ENCODE measurements at regions of chr2 and their contacts with region 1.

Region 1: GRCh38 chr2:163841187-163841586 is 105.4 kb upstream of the FIGN start:
- DNase-seq: no peak
- H3K4me3 ChIP-seq: no peak overlapping the region
- CTCF ChIP-seq: no peak

Region 2: DNA sequence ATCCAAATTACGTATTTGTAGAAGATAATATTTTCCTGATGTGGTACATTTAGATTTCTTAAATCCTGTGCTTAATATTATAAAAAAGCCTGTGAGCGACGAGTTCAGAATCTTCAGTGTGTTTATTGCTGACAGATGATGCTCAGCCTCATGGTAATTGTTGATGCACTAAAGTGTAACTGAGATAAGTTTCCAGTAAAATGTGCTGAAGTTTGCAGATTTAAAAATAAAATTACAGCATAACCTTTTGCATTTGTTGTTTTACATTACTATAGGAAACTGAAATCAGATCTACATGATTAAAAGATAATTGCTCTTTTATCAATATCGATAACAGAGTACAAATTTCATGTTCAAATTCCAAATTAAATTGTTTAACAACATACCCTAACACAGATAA is 413.0 kb before region 1 on chr2:
- in situ Hi-C with region 1: no loop called
- DNase-seq: no peak
- H3K4me3 ChIP-seq: no peak overlapping the region
- CTCF ChIP-seq: no peak

Region 3: DNA sequence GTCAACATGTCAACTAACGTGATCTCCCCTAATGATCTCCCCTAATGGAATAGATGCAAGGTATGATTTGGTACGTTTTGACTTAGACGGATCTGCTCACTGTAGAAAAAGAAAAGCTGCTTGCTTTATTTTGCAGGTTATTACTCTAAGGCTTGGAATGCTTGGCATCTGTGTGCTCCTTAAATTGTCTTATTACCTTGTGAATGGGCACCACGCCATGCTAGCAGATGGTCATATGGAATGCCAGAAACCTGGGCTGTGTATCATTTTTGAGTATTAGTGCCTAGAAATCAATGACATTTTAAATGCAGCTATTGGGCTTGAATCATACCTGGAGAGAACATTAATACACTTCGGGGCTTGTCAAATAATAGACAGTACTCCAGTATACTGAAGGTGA is 88.9 kb before region 1 on chr2:
- in situ Hi-C with region 1: loop called (anchors 5 kb)
- DNase-seq: no peak
- H3K4me3 ChIP-seq: no peak overlapping the region
- CTCF ChIP-seq: no peak

Region 4: GRCh38 chr2:163771601-163772000 is 69.6 kb before region 1 on chr2:
- in situ Hi-C with region 1: no loop called
- DNase-seq: no peak
- H3K4me3 ChIP-seq: no peak overlapping the region
- CTCF ChIP-seq: no peak

Region 5: GRCh38 chr2:163919719-163920118 is 78.5 kb after region 1 on chr2:
- in situ Hi-C with region 1: no loop called
- DNase-seq: no peak
- H3K4me3 ChIP-seq: no peak overlapping the region
- CTCF ChIP-seq: no peak

Measured in astrocyte of the cerebellum (primary cell).